ENCODE measurements at regions of chr1 and their contacts with region 1.

Region 1: DNA sequence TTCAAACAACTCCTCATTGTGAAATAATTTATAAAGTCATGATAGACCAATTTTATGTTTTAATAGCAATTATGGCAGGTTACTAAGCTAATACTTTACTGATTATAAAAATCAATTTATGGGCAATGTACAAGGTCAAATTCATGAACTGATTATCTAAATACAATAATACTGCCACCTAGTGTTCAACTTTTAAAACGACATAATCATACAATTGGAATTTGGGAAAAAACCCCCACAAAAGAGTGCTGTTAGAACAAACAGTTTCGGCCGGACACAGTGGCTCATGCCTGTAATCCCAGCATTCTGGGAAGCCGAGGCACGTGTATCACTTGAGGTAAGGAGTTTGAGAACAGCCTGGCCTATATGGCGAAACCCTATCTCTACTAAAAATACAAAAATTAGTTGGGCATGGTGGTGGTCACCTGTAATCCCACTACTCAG is 14.0 kb downstream of the GTF2B start:
- DNase-seq: no peak
- ATAC-seq: no peak
- H3K4me3 Mint-ChIP-seq: no peak overlapping the region
- H3K27ac Mint-ChIP-seq: peak overlapping the region; percentile 14
- H3K4me1 Mint-ChIP-seq: peaks cover 24% of the 10 kb centered on the region
- H3K27me3 Mint-ChIP-seq: no peaks in the 10 kb centered on the region
- CTCF ChIP-seq: peak; percentile 51

Region 2: DNA sequence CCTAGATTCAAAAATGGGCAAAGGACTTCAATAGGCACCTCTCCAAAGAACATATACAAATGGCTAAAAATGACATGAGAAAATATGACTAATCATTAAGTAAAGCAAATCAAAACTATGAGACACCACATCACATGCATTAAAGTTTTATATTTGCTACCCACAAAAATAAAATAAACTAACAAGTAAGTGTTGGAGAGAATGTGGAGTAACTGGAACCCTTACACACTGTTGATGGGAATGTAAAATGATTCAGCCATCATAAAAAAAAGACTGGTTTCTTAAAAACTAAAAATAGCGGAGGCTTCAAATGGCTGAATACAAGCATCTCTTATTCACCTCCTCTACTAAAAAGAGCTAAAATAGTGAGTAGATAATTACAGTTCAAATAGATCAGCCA is 455.4 kb before region 1 on chr1:
- CTCF ChIA-PET with region 1: no interaction called
- POLR2A ChIA-PET with region 1: no interaction called
- intact Hi-C with region 1: no loop called
- DNase-seq: no peak
- ATAC-seq: no peak
- H3K4me3 Mint-ChIP-seq: no peak overlapping the region
- H3K27ac Mint-ChIP-seq: no peak overlapping the region
- H3K4me1 Mint-ChIP-seq: no peaks in the 10 kb centered on the region
- H3K27me3 Mint-ChIP-seq: no peaks in the 10 kb centered on the region
- CTCF ChIP-seq: no peak

Region 3: DNA sequence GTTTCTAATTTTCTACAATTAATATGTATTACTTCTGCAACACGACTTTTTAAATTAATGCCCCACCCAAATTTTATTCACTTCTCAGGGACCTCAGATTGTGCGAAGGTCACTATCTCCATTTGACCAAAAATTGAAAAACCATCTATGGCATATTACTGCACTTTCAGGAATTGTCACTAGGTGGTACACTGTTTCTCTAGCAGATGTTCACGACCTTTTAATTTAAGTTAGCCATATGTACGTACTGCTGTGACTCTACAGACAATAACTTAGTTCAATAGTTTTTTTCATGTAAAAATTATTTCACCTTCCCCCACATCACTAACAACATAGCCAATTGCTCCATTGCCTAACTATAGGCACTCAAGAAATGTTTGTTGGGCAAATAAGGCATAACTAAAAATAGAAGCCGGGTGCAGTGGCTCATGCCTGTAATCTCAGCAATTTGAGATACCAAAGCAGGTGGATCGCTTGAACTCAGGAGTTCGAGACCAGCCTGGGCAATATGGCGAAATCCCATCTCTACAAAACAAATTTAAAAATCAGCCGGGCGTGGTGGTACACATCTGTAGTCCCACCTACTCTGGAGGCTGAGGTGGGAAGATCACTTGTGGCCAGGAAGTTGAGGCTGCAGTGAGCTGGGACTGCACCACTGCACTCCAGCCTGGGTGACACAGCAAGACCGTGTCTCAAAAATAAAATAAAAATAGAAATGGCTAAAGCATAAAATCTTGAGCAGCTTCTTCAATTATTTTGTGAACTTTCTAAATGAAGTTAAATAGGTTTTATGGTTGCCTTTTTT is 269.1 kb before region 1 on chr1:
- CTCF ChIA-PET with region 1: interaction called, 4 read pairs
- POLR2A ChIA-PET with region 1: no interaction called
- intact Hi-C with region 1: loop called (anchors 1 kb)
- DNase-seq: no peak
- ATAC-seq: peak; percentile 40
- H3K4me3 Mint-ChIP-seq: no peak overlapping the region
- H3K27ac Mint-ChIP-seq: no peak overlapping the region
- H3K4me1 Mint-ChIP-seq: no peaks in the 10 kb centered on the region
- H3K27me3 Mint-ChIP-seq: peaks cover 5% of the 10 kb centered on the region
- CTCF ChIP-seq: no peak